ENCODE measurements at regions of chr19 and their contacts with region 1.

Region 1: GRCh38 chr19:23969630-23970029 is 54.9 kb downstream of the ZNF726 start:
- DNase-seq: no peak
- H3K4me3 ChIP-seq: no peak overlapping the region
- H3K27ac ChIP-seq: no peak overlapping the region
- H3K4me1 ChIP-seq: no peaks in the 10 kb centered on the region
- H3K27me3 ChIP-seq: peaks cover 7% of the 10 kb centered on the region
- CTCF ChIP-seq: no peak
- POLR2A ChIP-seq: no peak

Region 2: DNA sequence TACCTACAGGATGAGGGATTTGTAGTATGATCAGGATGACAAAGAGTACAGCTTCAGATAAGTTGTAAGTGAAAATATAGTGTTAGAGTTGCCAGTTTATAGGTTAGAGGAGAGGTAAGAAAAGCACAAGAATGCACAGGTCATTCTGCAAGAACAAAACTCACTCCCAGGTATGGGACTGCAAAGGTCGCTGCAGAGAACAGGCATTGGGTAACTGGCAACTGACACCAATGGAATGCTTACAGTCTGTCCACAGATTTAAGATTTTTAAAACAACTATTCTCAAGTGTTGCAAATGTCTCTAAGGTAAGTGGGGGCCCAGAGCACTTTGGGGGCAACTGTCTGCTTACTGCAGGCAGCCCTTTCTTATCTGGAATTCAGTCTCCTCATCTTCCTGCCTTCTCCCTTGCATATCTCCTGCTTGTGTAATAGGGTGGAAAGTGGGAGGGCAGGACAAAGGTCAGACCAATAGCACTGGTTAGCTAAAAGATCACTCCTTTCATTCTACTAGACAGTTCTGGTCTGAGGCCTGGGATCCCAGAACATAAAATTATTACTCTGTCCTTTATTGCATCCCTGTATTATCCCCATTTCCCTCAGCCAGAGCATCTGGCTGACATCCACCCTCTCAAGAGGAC is 97.2 kb before region 1 on chr19:
- intact Hi-C with region 1: loop called in 1 of 2 experiments (anchors 5 kb)
- DNase-seq: no peak
- H3K4me3 ChIP-seq: no peak overlapping the region
- H3K27ac ChIP-seq: no peak overlapping the region
- H3K4me1 ChIP-seq: no peaks in the 10 kb centered on the region
- H3K27me3 ChIP-seq: no peaks in the 10 kb centered on the region
- CTCF ChIP-seq: no peak
- POLR2A ChIP-seq: no peak

Measured in adrenal gland (tissue), 19 donors.